ENCODE measurements at regions of chrX and their contacts with region 1.

Region 1: DNA sequence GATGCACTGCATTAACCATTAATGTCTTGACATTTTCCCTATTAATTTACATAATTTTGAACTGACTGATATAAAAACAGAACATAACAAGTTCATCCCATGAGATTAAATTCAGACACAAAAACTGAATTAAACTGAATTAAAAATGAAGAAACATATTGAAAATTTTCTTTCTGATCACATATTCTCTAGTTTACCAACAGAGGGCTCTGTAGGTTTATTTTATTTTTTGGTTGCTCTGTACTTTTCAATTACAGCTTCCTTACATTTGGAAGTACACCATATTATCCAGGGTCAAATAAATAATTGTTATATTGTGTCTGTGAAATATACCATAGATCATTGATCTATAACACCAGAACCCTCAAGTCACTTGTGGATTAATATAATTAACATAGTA is 27.3 kb upstream of the CT83 start:
- DNase-seq: peak; percentile 32
- ATAC-seq: no peak
- H3K4me3 ChIP-seq: no peak overlapping the region
- H3K27ac ChIP-seq: no peak overlapping the region
- H3K4me1 ChIP-seq: no peaks in the 10 kb centered on the region
- H3K27me3 ChIP-seq: no peaks in the 10 kb centered on the region
- CTCF ChIP-seq: peak; percentile 60

Region 2: GRCh38 chrX:116961872-116962582 is 471.9 kb after region 1 on chrX:
- CTCF ChIA-PET with region 1: no interaction called
- POLR2A ChIA-PET with region 1: no interaction called
- intact Hi-C with region 1: loop called (anchors 10 kb)
- DNase-seq: peak; percentile 14
- ATAC-seq: no peak
- H3K4me3 ChIP-seq: no peak overlapping the region
- H3K27ac ChIP-seq: no peak overlapping the region
- H3K4me1 ChIP-seq: no peaks in the 10 kb centered on the region
- H3K27me3 ChIP-seq: no peaks in the 10 kb centered on the region
- CTCF ChIP-seq: peak; percentile 39

Region 3: DNA sequence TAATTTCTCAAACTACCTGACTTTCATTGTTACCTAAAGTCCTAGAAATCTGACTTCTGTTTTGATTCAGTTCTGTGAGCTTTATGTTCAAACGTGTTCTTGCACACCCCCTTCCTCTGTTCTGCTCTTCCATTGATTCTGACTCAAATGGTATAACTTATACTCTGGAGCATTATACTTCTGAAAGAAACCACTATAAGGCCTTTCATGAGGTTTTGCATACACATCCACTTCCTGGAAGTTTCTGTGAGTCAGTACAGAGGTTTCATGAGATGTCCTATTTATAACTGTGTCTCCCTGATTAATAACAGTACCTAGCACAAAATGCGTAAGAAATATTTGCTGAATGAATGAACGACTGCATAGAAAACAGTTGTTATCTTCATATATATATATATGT is 512.9 kb after region 1 on chrX:
- CTCF ChIA-PET with region 1: no interaction called
- POLR2A ChIA-PET with region 1: no interaction called
- intact Hi-C with region 1: no loop called
- DNase-seq: no peak
- ATAC-seq: no peak
- H3K4me3 ChIP-seq: no peak overlapping the region
- H3K27ac ChIP-seq: no peak overlapping the region
- H3K4me1 ChIP-seq: no peaks in the 10 kb centered on the region
- H3K27me3 ChIP-seq: no peaks in the 10 kb centered on the region
- CTCF ChIP-seq: no peak

Region 4: DNA sequence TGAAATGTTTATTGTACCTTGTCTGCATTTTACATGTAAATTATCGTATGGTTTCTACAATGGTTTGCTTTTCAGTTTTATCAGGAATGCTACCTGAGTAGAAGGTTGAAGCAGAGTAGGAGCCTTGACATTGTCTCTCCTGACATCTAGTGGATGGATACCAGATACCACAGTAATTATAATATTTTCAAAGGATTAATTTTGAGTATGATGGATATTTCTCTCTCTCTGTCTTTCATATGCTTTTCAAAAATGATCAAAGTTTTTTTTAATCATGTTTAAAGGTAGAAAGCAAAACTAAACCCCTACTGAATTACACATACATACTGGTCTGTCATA is 1736.0 kb after region 1 on chrX:
- CTCF ChIA-PET with region 1: no interaction called
- POLR2A ChIA-PET with region 1: no interaction called
- intact Hi-C with region 1: loop called (anchors 10 kb)
- DNase-seq: peak; percentile 45
- ATAC-seq: peak; percentile 74
- H3K4me3 ChIP-seq: peak overlapping the region; percentile 36; the same call in 1 of the 2 replicates
- H3K27ac ChIP-seq: peak overlapping the region; percentile 82
- H3K4me1 ChIP-seq: peaks cover 13% of the 10 kb centered on the region; the same call in 1 of the 2 replicates
- H3K27me3 ChIP-seq: no peaks in the 10 kb centered on the region
- CTCF ChIP-seq: peak; percentile 74